HCT116 (cell line): ENCODE measurements at regions of chr1 and their contacts with region 1.

Region 1: GRCh38 chr1:147242439-147243227 is at the start of gene CHD1L:
- DNase-seq: peak; percentile 90
- ATAC-seq: peak; percentile 91
- H3K4me3 ChIP-seq: peak within 1 kb of the TSS; percentile 73 to 88
- H3K27ac ChIP-seq: peak within 1 kb of the TSS; percentile 97
- H3K4me1 ChIP-seq: peaks cover 8 to 35% of the 10 kb centered on the region in 2 experiments; a peak in 3 of 4 replicates
- H3K27me3 ChIP-seq: no peaks in the 10 kb centered on the region
- CTCF ChIP-seq: peak; percentile 78 to 98 (median 91)
- POLR2A ChIP-seq: peak; percentile 77
- RAD21 ChIP-seq: peak; percentile 97
- total RNA-seq, gene CHD1L: 52.0 TPM

Region 2: DNA sequence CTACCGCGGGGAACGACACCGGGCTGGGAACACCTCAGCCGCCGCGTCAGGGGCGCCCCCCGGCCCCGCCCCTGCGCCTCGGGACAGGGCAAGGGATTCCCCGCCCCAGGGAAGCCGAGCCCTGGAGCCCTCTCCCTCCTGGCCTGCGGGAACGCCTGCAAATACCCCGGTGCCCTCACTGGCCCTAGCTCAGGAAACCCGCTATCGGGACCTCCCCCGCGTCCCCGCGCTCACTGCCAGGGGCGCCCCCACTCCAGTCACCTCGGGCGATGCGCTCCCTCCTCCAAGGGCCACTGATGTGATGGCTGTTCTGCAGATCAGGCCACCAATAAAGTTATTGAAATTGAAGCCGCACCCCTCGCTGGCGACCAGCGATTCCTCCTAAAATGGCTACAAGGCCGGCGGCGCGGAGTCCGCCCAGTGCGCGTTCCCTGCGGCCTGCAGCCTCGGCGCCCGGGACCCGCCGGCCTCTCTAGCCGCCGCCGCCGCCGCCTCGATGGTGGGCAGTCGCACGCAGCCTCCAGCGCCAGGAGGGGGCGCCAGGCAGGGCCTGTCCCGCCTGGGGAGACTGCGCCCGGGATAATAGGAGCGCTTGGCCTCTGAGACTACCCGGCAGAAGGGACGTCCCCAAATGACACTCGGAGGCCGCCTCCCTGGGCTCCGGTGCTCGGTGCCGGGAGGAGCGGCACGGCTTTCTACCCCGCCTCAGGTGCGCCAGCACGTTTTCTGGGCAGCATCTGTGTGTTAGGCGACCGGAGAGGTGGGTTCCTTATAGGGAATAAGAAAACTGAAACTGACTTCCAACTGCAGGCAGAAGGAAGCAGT is 70.3 kb before region 1 on chr1 and contains the start of gene PRKAB2:
- CTCF ChIA-PET with region 1: interaction called, 16 read pairs
- POLR2A ChIA-PET with region 1: interaction called, 4 read pairs
- RAD21 ChIA-PET with region 1: no interaction called
- intact Hi-C with region 1: loop called (anchors 1 kb)
- DNase-seq: peak; percentile 91
- ATAC-seq: peak; percentile 92
- H3K4me3 ChIP-seq: peak within 1 kb of the TSS; percentile 67 to 91
- H3K27ac ChIP-seq: peak within 1 kb of the TSS; percentile 86
- H3K4me1 ChIP-seq: peaks cover 25 to 47% of the 10 kb centered on the region in 2 experiments
- H3K27me3 ChIP-seq: no peaks in the 10 kb centered on the region
- CTCF ChIP-seq: peak; percentile 74 to 80 (median 78)
- POLR2A ChIP-seq: no peak
- RAD21 ChIP-seq: peak; percentile 59
- total RNA-seq, gene PRKAB2: 10.9 TPM

Region 3: GRCh38 chr1:147189514-147189913 is 53.1 kb before region 1 on chr1:
- CTCF ChIA-PET with region 1: no interaction called
- POLR2A ChIA-PET with region 1: no interaction called
- RAD21 ChIA-PET with region 1: no interaction called
- intact Hi-C with region 1: no loop called
- DNase-seq: no peak
- ATAC-seq: no peak
- H3K4me3 ChIP-seq: no peak overlapping the region
- H3K27ac ChIP-seq: no peak overlapping the region
- H3K4me1 ChIP-seq: no peaks in the 10 kb centered on the region
- H3K27me3 ChIP-seq: no peaks in the 10 kb centered on the region
- CTCF ChIP-seq: no peak
- POLR2A ChIP-seq: no peak
- RAD21 ChIP-seq: no peak